ENCODE measurements at regions of chr13 and their contacts with region 1.

Region 1: GRCh38 chr13:37109051-37109678 is 3.7 kb upstream of the CSNK1A1L start:
- DNase-seq: peak; percentile 11
- H3K4me3 Mint-ChIP-seq: no peak overlapping the region
- H3K27ac Mint-ChIP-seq: no peak overlapping the region
- H3K4me1 Mint-ChIP-seq: no peaks in the 10 kb centered on the region
- H3K27me3 Mint-ChIP-seq: no peaks in the 10 kb centered on the region
- CTCF ChIP-seq: peak; percentile 11

Region 2: DNA sequence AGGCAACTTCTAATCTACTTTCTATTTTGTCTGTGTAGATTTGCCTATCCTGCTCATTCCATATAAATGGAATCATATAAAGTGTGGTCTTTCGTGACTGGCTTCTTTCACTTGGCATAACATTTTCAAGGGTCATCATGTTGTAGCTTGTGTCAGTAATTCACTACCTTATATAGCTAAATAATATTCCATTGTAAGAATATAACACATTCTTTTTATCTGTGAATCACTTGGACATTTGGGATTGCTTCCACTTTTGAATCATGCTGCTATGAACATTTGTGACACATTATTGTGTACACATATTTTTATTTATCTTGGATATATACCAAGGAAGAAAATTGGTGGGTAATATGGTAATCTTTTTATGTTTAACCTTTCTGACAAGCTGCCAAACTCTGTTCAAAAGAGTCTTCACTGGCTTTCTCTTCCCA is 85.3 kb after region 1 on chr13:
- CTCF ChIA-PET with region 1: no interaction called
- intact Hi-C with region 1: no loop called
- DNase-seq: no peak
- H3K4me3 Mint-ChIP-seq: no peak overlapping the region
- H3K27ac Mint-ChIP-seq: no peak overlapping the region
- H3K4me1 Mint-ChIP-seq: peaks cover 9% of the 10 kb centered on the region
- H3K27me3 Mint-ChIP-seq: no peaks in the 10 kb centered on the region
- CTCF ChIP-seq: no peak

Region 3: DNA sequence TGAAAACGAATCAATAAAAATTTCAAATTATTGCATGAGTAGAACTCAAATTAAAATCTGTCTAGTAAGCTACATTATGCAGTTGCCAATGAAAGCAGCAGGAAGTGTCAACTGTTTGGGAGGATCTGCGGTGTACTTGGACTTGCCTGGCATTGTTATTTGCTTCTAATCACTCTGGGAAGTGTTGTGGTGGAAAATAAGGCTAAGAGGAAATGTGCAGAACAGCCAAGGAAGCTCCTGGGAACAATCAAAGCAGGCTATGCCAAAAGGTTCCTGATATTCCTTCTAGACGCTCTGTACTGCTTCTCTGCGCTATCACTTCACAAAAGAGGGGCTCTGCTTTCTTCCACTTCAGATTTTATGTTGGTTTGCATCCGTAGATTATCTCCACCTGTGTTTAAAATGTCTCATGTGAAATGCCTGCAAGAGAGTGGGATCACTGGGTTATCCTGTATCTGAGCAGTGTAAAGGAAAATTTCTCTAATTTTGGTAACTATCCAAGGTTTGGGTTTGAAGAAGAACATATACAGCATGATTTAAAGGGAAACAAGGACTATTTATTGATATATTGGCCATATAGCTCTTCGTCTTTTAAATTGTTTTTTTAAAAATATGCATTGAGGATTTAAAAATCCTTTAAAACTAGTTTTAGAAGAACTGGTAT is 179.0 kb after region 1 on chr13:
- CTCF ChIA-PET with region 1: no interaction called
- intact Hi-C with region 1: no loop called
- DNase-seq: no peak
- H3K4me3 Mint-ChIP-seq: no peak overlapping the region
- H3K27ac Mint-ChIP-seq: no peak overlapping the region
- H3K4me1 Mint-ChIP-seq: no peaks in the 10 kb centered on the region
- H3K27me3 Mint-ChIP-seq: no peaks in the 10 kb centered on the region
- CTCF ChIP-seq: no peak

Region 4: DNA sequence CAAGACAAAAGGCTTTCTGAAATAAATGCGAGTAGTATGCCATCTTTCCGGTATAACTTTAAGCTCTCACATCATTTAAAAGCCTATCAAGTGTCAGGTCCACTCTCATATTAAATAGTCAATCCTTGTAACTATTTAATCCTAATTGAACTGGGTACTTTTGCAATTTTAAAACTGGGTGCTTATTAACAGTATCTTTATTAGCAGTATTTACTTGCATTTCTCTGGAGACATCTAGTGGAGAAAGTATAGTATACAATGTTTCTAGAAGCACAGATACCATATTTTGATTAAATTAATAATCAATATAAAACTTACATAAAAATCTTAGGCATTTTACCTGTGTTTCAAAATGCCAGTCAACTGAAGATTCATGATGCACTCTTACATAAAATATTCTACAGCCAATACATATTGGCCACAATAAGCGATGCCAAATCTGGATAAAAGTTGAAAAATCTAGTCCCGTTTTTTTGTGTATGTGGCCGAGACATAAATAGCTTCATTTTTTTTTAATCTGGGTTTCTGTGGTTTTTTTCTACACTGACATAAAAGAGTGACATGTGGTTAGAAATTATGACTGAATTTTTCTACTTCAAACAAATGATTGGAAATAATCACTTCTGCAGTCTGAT is 493.7 kb after region 1 on chr13:
- CTCF ChIA-PET with region 1: no interaction called
- intact Hi-C with region 1: loop called (anchors 1 kb)
- DNase-seq: no peak
- H3K4me3 Mint-ChIP-seq: no peak overlapping the region
- H3K27ac Mint-ChIP-seq: no peak overlapping the region
- H3K4me1 Mint-ChIP-seq: no peaks in the 10 kb centered on the region
- H3K27me3 Mint-ChIP-seq: no peaks in the 10 kb centered on the region
- CTCF ChIP-seq: peak; percentile 12

Region 5: GRCh38 chr13:37617161-37617560 is 508.0 kb after region 1 on chr13:
- CTCF ChIA-PET with region 1: no interaction called
- intact Hi-C with region 1: loop called (anchors 5 kb)
- DNase-seq: peak; percentile 3
- H3K4me3 Mint-ChIP-seq: no peak overlapping the region
- H3K27ac Mint-ChIP-seq: peak overlapping the region; percentile 54
- H3K4me1 Mint-ChIP-seq: peaks cover 15% of the 10 kb centered on the region
- H3K27me3 Mint-ChIP-seq: no peaks in the 10 kb centered on the region
- CTCF ChIP-seq: no peak